Head of caudate nucleus (tissue), 42 donors: ENCODE measurements at regions of chr11 and their contacts with region 1.

Region 1: GRCh38 chr11:117678658-117679406 is 118.2 kb downstream of the DSCAML1 start:
- DNase-seq: peak; percentile 49 to 92 (median 74)

Region 2: DNA sequence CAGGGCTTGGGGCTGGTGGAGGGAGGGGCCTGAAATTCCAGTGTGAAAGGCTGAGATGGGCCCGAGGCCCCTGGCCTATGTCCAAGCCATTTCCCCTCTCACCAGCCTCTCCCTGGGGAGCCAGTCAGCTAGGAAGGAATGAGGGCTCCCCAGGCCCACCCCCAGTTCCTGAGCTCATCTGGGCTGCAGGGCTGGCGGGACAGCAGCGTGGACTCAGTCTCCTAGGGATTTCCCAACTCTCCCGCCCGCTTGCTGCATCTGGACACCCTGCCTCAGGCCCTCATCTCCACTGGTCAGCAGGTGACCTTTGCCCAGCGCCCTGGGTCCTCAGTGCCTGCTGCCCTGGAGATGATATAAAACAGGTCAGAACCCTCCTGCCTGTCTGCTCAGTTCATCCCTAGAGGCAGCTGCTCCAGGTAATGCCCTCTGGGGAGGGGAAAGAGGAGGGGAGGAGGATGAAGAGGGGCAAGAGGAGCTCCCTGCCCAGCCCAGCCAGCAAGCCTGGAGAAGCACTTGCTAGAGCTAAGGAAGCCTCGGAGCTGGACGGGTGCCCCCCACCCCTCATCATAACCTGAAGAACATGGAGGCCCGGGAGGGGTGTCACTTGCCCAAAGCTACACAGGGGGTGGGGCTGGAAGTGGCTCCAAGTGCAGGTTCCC is 849.2 kb before region 1 on chr11 and contains the start of gene APOC3:
- intact Hi-C with region 1: no loop called
- DNase-seq: no peak

Region 3: DNA sequence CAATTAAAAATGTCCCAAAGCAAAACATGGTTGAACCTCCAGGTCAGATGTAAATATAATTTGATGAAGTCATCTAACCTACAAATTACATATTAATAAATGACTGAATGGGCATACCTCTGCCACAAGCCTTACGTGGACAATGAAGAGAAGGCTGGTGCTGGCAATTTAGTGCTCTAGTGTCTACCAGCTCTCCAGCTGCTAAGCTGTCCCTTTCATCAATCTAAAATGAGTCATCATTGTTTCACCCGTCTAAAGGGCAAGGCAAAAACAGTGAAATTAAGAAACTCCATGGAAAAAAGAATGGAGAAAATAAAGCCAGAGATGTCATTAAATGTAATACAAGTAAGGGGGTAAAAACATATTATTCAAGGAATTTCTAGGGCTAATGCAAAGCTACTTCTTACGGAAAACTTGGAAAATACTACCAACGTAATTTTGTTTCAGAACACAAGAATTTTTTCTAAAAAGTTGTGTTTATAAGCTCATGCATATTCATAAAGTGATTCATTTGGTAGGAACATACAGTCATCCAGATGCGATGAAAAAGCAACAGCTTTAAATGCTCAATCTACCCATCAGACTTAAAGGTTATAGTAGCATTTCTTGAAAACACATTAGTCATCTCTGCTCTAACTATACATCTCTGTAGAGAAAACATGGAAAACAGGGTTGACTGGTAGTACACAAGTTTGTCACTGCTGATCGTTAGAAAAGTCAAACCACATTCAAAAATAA is 652.1 kb before region 1 on chr11:
- intact Hi-C with region 1: no loop called
- DNase-seq: peak in 1 of 42 donors; percentile 40

Region 4: DNA sequence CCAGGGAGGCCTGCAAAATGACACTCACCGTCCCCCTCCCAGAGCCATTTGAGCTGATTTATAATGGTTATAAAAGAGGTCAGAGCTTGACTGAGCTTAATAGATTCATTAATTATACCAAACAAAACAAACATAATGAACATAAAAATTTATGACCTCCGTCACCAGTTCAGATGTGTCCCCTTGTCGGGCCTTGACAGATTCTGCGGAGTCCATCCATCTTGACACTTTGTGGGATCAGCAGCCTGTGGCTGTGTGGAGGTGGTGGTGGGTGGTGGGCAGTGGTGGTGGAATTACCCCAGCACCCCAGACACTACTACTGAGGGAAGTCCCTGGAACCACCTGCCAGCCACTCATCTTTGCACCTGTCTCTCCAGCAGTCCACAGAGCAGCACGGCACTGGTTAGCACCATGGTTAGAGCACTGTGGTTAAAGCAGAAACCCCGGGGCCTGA is 34.7 kb after region 1 on chr11:
- intact Hi-C with region 1: loop called (anchors 5 kb)
- DNase-seq: no peak

Region 5: DNA sequence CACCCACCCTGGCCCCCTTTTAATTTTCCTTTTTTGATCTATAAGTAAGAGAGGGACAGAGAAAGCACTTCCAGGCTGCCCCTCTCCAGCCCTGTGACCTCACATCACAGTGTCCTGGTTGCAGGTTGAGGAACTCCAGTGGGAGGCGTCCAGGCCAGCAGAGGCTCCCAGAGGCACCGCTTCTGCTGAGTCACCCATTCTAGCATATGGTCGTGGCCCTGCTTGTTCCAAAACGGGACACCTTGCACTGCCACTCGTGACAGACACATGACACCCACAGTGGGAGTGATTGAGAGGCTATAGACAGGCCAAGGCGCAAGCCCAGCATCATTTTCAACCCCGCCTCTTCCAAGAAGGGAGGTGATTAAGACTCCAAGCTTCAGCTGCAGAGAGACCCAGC is 382.0 kb after region 1 on chr11:
- intact Hi-C with region 1: no loop called
- DNase-seq: peak in 18 of 42 donors; percentile 14 to 62 (median 35)